GM12878 (cell line): ENCODE measurements at regions of chr15 and their contacts with region 1.

Region 1: GRCh38 chr15:71743861-71744382 is 66.4 kb upstream of the NR2E3 start:
- DNase-seq: no peak
- ATAC-seq: peak; percentile 65
- H3K4me3 ChIP-seq: no peak overlapping the region
- H3K27ac ChIP-seq: no peak overlapping the region
- H3K4me1 ChIP-seq: no peaks in the 10 kb centered on the region
- H3K27me3 ChIP-seq: peaks cover 1 to 5% of the 10 kb centered on the region in 2 experiments; a peak in 3 of 4 replicates
- CTCF ChIP-seq: peak; percentile 60 to 75 (median 61)
- EP300 ChIP-seq: no peak
- POLR2A ChIP-seq: no peak
- RAD21 ChIP-seq: peak; percentile 74

Region 2: GRCh38 chr15:71691458-71692417 is 52.2 kb before region 1 on chr15:
- CTCF ChIA-PET with region 1: no interaction called
- POLR2A ChIA-PET with region 1: no interaction called
- RAD21 ChIA-PET with region 1: no interaction called
- SMC1A ChIA-PET with region 1: no interaction called
- in situ Hi-C with region 1: no loop called
- intact Hi-C with region 1: no loop called
- DNase-seq: no peak
- ATAC-seq: no peak
- H3K4me3 ChIP-seq: no peak overlapping the region
- H3K27ac ChIP-seq: no peak overlapping the region
- H3K4me1 ChIP-seq: no peaks in the 10 kb centered on the region
- H3K27me3 ChIP-seq: peaks cover 0 to 1% of the 10 kb centered on the region in 2 experiments; a peak in 2 of 4 replicates
- CTCF ChIP-seq: no peak
- EP300 ChIP-seq: no peak
- POLR2A ChIP-seq: no peak
- RAD21 ChIP-seq: no peak

Region 3: DNA sequence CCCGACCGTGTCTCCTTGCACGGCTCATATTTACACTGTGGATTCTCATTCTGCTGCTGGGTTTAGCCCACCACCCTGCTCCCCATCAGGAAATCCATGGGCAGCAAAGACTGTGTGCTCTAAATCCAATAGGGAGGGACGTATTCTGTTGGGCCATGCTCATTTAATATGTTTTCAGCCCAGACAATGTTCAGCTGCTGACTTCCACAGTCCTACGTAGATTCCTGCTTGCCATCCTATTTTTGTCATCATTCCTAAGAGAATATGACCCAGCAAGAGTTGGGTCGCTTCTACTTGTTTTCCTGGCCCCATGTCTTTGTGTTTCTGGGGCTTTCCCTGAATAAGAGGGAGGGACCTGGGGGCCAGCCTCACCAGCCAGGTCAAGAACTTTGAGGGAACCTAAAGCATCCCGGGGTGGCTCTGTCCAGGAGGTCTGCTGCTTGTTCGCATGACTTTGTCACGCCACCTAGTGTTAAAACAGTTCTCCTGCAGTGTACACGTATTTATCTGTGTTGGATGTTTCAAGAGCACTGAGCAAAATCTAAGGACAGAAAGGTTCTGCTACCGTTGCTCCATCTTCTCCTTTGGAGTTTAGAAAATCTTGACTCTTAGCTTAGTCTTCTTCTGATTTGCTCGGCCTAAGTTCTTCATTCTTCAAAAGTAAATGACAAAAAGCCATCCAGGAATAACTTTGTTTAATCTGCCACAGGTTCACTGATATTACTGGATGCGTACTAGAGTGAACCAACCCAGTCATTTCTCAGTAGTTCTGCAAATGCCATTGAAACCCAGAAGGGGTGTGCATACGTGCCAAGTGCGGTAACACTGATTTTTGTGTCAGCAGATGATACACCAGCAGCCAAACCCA is 13.4 kb before region 1 on chr15:
- CTCF ChIA-PET with region 1: interaction called, 12 read pairs
- POLR2A ChIA-PET with region 1: no interaction called
- RAD21 ChIA-PET with region 1: no interaction called
- SMC1A ChIA-PET with region 1: no interaction called
- in situ Hi-C with region 1: no loop called
- intact Hi-C with region 1: no loop called
- DNase-seq: no peak
- ATAC-seq: peak; percentile 94
- H3K4me3 ChIP-seq: no peak overlapping the region
- H3K27ac ChIP-seq: no peak overlapping the region
- H3K4me1 ChIP-seq: no peaks in the 10 kb centered on the region
- H3K27me3 ChIP-seq: 0 out of 4 replicates have a peak, but pooled peaks cover 0 to 2% of the 10 kb centered on the region in 2 experiments
- CTCF ChIP-seq: peak; percentile 68 to 76 (median 75)
- EP300 ChIP-seq: no peak
- POLR2A ChIP-seq: no peak
- RAD21 ChIP-seq: peak; percentile 75

Region 4: GRCh38 chr15:71757741-71758520 is 14.0 kb after region 1 on chr15:
- CTCF ChIA-PET with region 1: interaction called, 33 read pairs
- POLR2A ChIA-PET with region 1: interaction called, 3 read pairs
- RAD21 ChIA-PET with region 1: interaction called, 6 read pairs
- SMC1A ChIA-PET with region 1: interaction called, 8 read pairs
- in situ Hi-C with region 1: no loop called
- intact Hi-C with region 1: no loop called
- DNase-seq: no peak
- ATAC-seq: no peak
- H3K4me3 ChIP-seq: no peak overlapping the region
- H3K27ac ChIP-seq: no peak overlapping the region
- H3K4me1 ChIP-seq: no peaks in the 10 kb centered on the region
- H3K27me3 ChIP-seq: no peaks in the 10 kb centered on the region; a peak in 1 of 4 replicates
- CTCF ChIP-seq: no peak
- EP300 ChIP-seq: no peak
- POLR2A ChIP-seq: no peak
- RAD21 ChIP-seq: no peak

Region 5: DNA sequence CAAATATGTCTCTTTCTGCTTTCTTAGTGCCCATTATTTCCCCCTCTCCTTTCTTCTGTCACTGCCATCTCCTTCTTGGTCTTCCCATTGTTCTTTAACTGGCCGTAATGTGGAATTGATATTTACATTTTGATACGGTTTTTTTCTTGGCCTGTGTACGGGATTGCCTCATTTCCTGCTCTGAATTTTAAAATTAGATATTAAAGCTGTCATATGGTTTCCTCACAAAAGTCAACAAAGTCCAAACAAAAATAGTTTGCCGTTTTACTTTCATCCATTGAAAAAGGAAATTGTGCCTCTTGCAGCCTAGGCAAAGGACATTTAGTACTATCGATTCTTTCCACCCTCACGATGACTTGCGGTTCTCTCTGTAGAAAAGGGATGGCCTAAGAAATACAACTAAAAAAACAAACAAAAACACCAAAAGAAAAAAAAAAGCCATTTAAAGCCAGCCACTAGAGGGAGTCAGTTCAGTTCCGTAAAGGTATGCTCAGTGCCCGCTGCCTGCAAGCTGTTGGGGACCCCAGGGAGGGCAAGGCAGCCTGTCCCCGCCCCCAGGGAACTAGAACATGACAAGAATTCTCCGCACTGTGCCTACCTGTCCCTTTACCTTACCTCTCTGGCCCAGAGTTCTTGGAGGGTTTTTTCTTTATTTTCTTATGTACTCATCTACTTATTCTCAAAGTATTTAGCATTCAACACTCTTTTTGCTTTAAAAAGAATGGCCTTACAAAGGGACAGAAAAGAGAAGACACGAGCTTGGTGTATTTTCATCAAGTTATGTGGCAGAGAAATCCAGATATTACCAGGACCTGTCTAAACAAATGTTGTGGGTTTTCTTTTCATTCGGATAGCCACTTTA is 36.4 kb after region 1 on chr15:
- CTCF ChIA-PET with region 1: interaction called, 26 read pairs
- POLR2A ChIA-PET with region 1: no interaction called
- RAD21 ChIA-PET with region 1: interaction called, 7 read pairs
- SMC1A ChIA-PET with region 1: no interaction called
- in situ Hi-C with region 1: no loop called
- intact Hi-C with region 1: no loop called
- DNase-seq: peak; percentile 49
- ATAC-seq: peak; percentile 86
- H3K4me3 ChIP-seq: 0 out of 2 replicates have a peak overlapping the region, but pooled peaks have one; percentile 19
- H3K27ac ChIP-seq: peak overlapping the region; percentile 40; the same call in 1 of the 2 replicates
- H3K4me1 ChIP-seq: peaks cover 18% of the 10 kb centered on the region
- H3K27me3 ChIP-seq: no peaks in the 10 kb centered on the region
- CTCF ChIP-seq: peak; percentile 68 to 84 (median 74)
- EP300 ChIP-seq: no peak
- POLR2A ChIP-seq: no peak
- RAD21 ChIP-seq: peak; percentile 47

Region 6: DNA sequence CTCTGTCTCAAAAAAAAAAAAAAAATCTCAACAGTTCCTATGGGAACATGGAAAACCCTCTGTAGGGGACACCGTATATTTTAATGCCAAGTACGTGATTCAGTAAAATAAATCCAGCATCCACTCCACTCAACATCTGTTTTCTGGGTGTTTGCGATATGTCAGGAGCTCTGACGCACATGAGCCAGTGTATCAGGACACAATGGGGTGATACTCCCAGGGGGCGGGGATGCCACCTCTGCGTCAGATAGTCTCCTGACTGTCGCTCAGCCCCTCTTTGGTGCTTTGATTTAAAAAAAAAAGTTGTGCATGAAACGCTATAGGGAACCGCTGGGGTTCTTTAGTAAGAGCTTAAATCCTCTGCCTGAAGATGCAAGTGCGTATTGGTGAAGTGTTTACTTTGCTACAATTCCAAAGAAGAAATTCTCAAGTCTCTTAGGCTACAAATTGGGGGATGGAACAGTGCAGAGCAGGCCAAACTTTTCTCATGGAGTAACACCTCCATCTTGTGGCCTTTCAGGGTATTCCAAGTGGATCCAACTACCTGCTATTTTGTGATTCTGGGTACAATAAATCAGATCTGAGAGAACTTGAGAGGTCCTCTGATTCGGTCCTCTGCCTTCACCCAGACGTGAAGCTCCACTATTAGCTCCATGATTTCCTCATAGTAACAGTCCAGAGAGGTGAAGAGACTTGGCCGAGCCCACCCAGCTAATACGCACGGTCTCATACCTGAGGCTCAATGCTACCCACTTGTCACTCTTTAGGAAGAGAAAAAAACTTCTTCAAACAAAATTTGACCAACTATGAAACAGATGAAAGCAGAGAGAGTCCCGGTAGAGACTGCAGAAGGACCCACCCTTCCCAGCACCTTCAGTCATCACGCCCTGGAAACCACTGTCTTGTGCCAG is 57.2 kb after region 1 on chr15:
- CTCF ChIA-PET with region 1: interaction called, 49 read pairs
- POLR2A ChIA-PET with region 1: no interaction called
- RAD21 ChIA-PET with region 1: interaction called, 25 read pairs
- SMC1A ChIA-PET with region 1: interaction called, 9 read pairs
- in situ Hi-C with region 1: loop called (anchors 5 kb)
- intact Hi-C with region 1: loop called (anchors 1 kb)
- DNase-seq: no peak
- ATAC-seq: peak; percentile 78
- H3K4me3 ChIP-seq: no peak overlapping the region
- H3K27ac ChIP-seq: no peak overlapping the region
- H3K4me1 ChIP-seq: peaks cover 10% of the 10 kb centered on the region
- H3K27me3 ChIP-seq: no peaks in the 10 kb centered on the region
- CTCF ChIP-seq: peak; percentile 65 to 86 (median 72); a peak in 5 of 6 replicates
- EP300 ChIP-seq: no peak
- POLR2A ChIP-seq: no peak
- RAD21 ChIP-seq: peak; percentile 96